Adrenal gland (tissue), 19 donors: ENCODE measurements at regions of chr3 and their contacts with region 1.

Region 1: DNA sequence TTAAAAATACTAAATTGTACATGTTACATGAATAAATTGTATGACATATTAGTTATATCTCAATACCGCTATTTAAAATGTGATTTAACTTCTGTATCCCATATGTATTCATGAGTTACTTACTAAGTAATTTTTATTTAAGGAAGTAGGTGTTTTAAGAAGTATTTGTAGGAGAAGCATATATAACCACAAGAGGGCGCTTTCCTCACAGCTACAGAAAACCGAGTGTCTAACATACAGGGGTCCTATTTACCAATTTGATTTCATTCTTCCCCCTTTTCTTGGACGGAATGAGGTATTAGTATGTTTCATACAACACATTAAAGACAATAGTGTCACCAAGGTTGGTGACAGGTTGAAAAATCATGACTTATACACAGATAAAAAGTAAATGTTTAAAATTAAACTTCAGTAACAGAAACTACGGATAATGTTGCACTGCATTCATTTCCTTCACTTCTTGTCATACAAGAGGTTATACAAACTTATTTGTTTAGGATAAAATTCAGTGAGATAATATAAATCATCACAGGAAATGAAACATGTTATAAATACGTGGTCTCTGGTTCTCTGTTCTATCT is 253.6 kb downstream of the MAGI1 start:
- DNase-seq: peak in 2 of 7 donors; percentile 11 to 16
- H3K4me3 ChIP-seq: no peak overlapping the region
- H3K27ac ChIP-seq: no peak overlapping the region
- H3K4me1 ChIP-seq: peaks cover 0 to 6% of the 10 kb centered on the region in 2 donors
- H3K27me3 ChIP-seq: no peaks in the 10 kb centered on the region
- CTCF ChIP-seq: peak; percentile 52 to 83 (median 70)
- POLR2A ChIP-seq: no peak

Region 2: GRCh38 chr3:65827076-65827475 is 41.9 kb after region 1 on chr3:
- intact Hi-C with region 1: no loop called
- DNase-seq: no peak
- H3K4me3 ChIP-seq: no peak overlapping the region
- H3K27ac ChIP-seq: no peak overlapping the region
- H3K4me1 ChIP-seq: peaks cover 0 to 20% of the 10 kb centered on the region in 2 donors
- H3K27me3 ChIP-seq: no peaks in the 10 kb centered on the region
- CTCF ChIP-seq: no peak
- POLR2A ChIP-seq: no peak

Region 3: DNA sequence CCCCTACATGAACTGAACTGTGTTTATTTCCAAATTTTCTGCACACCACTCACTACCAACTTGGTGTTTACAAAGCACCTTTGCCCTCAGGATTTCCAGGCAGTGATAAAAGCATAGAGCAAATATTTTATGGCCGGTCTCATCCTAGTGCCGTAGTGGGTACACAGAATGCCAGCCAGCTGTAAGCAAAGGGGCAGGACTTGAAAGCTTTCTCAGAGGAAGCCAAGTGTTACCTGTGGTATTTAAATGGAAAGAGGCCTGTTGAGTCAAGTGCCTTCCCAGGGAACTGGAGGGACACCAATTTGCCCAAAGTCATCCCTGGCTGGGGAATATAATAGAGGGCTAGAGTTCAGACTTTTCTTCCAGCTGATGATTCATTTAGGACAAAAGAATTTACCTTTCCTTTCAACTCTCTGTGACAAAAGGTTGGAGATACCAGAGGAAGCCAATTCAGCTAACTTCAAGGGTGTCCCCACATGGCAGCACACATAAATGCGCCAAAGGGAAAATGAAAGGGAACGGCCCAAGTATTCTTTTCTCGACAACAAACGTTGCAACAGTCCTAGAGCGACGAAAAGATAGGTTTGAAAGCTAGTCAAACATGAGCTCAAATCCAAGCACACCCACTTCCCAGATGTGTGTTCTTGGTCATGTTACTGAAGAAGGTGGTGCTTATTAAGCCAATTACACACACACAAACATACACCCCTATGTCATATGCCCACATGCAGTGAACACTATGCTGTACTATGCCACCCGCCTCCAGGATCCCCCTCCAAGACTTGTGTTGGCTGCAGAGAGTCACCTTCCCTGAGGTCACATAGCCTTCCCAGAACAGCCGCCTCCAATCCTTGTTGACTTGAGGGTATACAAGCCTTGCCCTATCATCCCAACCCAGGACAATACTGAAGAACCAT is 225.8 kb after region 1 on chr3:
- intact Hi-C with region 1: no loop called
- DNase-seq: no peak
- H3K4me3 ChIP-seq: no peak overlapping the region
- H3K27ac ChIP-seq: no peak overlapping the region
- H3K4me1 ChIP-seq: no peaks in the 10 kb centered on the region
- H3K27me3 ChIP-seq: no peaks in the 10 kb centered on the region
- CTCF ChIP-seq: no peak
- POLR2A ChIP-seq: no peak

Region 4: GRCh38 chr3:66047311-66048050 is 262.3 kb after region 1 on chr3:
- intact Hi-C with region 1: loop called in 1 of 2 experiments (anchors 10 kb)
- DNase-seq: peak in 6 of 7 donors; percentile 47 to 82 (median 56)
- H3K4me3 ChIP-seq: peak overlapping the region in 1 of 4 donors; percentile 10
- H3K27ac ChIP-seq: peak overlapping the region in 2 of 5 donors; percentile 3 to 51
- H3K4me1 ChIP-seq: peaks cover 7 to 13% of the 10 kb centered on the region in 2 donors
- H3K27me3 ChIP-seq: no peaks in the 10 kb centered on the region
- CTCF ChIP-seq: no peak
- POLR2A ChIP-seq: no peak

Region 5: GRCh38 chr3:66138336-66139313 is 353.5 kb after region 1 on chr3:
- intact Hi-C with region 1: loop called (anchors 5 to 10 kb)
- DNase-seq: peak; percentile 43 to 83 (median 64)
- H3K4me3 ChIP-seq: no peak overlapping the region
- H3K27ac ChIP-seq: no peak overlapping the region
- H3K4me1 ChIP-seq: peaks cover 0 to 4% of the 10 kb centered on the region in 2 donors
- H3K27me3 ChIP-seq: no peaks in the 10 kb centered on the region
- CTCF ChIP-seq: peak; percentile 63 to 83 (median 77)
- POLR2A ChIP-seq: no peak

Region 6: GRCh38 chr3:66200147-66200546 is 415.0 kb after region 1 on chr3:
- intact Hi-C with region 1: loop called in 1 of 2 experiments (anchors 5 kb)
- DNase-seq: no peak
- H3K4me3 ChIP-seq: no peak overlapping the region
- H3K27ac ChIP-seq: no peak overlapping the region
- H3K4me1 ChIP-seq: no peaks in the 10 kb centered on the region
- H3K27me3 ChIP-seq: no peaks in the 10 kb centered on the region
- CTCF ChIP-seq: no peak
- POLR2A ChIP-seq: no peak